PC-9 (cell line): ENCODE measurements at regions of chr7 and their contacts with region 1.

Region 1: GRCh38 chr7:2425749-2426148 is 22.3 kb downstream of the CHST12 start:
- DNase-seq: no peak
- H3K4me3 ChIP-seq: no peak overlapping the region
- H3K27ac ChIP-seq: no peak overlapping the region
- H3K4me1 ChIP-seq: peaks cover 14% of the 10 kb centered on the region
- H3K27me3 ChIP-seq: no peaks in the 10 kb centered on the region
- CTCF ChIP-seq: no peak

Region 2: DNA sequence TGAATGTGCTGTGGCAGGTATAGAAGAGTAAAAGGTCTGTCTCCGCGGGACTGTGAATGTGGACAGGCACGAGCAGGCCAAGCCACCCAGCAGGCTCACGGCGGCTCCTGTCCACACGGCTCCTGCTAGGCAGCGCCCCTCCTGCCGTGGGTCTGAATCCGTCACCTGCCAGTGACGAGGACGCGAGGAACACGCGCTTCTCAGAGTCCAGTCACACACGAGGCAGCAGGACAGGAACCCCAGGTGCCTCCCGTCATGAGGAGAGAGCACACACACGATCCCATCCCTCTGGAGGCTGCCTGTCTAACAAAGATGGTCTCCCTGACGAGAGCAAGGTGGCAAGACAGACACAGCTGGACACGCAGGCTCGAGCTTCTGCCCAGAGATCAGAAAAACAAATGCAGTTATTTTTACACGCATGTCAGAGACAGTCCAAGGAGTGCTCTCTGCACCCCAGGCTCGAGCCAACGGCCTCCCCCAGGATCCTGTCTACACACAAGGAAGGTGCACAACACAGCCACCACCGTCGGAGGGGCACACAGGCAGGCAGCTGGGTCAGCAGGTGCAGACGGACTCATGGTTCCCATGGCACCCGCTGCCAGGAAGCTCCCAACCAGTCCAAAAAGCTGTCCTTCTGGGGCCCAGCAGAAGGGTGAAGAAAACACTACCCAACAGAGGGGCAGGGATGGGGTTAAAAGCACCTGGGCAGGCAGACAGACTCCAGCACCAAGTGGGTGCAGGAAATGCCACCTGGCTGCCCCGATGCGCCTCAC is 296.2 kb before region 1 on chr7:
- CTCF ChIA-PET with region 1: no interaction called
- POLR2A ChIA-PET with region 1: no interaction called
- intact Hi-C with region 1: no loop called
- DNase-seq: no peak
- H3K4me3 ChIP-seq: no peak overlapping the region
- H3K27ac ChIP-seq: no peak overlapping the region
- H3K4me1 ChIP-seq: no peaks in the 10 kb centered on the region
- H3K27me3 ChIP-seq: no peaks in the 10 kb centered on the region
- CTCF ChIP-seq: no peak

Region 3: DNA sequence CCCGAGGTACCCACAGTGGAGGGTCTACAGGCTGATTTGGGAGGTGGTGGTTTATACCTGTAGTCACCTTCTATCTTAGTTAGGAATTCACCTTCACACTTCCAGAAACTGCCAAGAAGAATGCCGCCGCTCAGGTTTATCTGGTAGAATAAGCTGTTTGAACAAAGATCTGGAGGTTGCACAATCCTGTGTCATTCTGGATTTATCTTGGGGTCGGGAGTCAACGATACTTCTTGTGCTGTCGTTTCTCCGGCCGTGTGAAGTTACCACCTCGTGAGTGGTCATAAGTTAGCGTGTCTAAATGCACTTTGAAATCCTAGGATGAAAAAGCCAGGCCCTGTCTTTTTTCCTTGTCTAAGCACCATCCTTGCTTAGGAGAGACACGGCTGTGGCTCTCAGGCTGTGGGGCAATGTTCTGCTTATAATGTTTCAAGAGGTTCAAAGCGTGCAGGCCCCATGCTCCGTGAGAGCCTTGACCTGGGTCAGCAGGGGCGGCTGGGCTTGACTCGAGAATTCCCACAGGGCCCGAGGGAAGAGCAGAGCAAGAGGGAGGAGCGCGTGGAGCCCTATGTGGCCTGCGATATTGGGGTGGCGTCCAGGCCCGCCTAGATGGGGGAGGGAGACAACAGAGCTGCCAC is 15.0 kb after region 1 on chr7:
- CTCF ChIA-PET with region 1: no interaction called
- POLR2A ChIA-PET with region 1: no interaction called
- intact Hi-C with region 1: loop called (anchors 1 kb)
- DNase-seq: peak; percentile 82 to 98
- H3K4me3 ChIP-seq: peak overlapping the region; percentile 32; the same call in 1 of the 2 replicates
- H3K27ac ChIP-seq: peak overlapping the region; percentile 86
- H3K4me1 ChIP-seq: peaks cover 56% of the 10 kb centered on the region
- H3K27me3 ChIP-seq: no peaks in the 10 kb centered on the region
- CTCF ChIP-seq: no peak